CD4-positive, alpha-beta T cell (primary cell): ENCODE measurements at regions of chr21 and their contacts with region 1.

Region 1: DNA sequence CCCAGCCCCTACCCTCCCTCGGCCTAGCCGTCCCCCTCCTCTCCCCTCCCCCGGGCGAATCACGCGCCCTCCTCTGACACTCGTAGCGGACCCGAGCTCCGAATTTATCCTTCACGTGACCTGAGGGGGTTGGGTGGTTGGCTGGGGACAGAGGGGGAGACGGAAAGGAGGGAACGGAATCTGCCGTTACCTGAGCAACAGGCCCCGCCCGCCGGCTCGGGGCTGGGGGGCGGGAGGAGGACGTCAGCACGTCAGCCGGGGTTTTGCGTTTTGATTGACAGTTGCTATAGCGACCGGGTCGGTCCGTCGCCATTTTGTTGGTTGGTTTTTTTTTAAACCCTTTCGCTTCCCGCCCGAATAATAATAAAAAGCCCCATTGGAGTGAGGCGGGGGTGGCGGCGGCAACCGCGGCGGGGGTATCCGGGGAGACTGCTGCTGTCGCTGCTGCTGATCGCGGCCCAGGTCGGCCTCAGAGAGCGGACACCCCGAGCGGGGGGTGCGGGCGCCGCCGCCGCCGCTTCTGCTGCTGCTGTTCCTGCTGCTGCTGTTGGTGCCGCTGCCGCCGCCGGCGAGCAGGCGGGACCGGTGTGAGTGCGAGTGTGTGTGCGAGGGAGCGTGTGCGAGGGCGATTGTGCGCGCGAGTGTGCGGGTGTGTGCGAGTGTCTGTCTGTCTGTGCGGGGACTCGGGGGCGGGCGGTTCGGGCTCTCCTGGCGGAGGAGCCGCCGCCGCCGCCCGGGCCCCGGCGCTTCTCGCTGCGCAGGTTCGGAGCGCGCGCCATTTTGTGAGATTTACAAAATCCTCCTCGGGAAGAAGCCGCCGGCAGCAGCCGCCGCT is at the start of gene DYRK1A:
- DNase-seq: peak; percentile 97 to 100 (median 98)
- ATAC-seq: peak; percentile 82
- H3K4me3 ChIP-seq: peak within 1 kb of the TSS; percentile 83
- H3K4me3 Mint-ChIP-seq: peak within 1 kb of the TSS; percentile 100
- H3K27ac ChIP-seq: peak within 1 kb of the TSS; percentile 92 to 99
- H3K27ac Mint-ChIP-seq: peak within 1 kb of the TSS; percentile 99
- H3K4me1 ChIP-seq: peaks cover 17% of the 10 kb centered on the region
- H3K4me1 Mint-ChIP-seq: peaks cover 53% of the 10 kb centered on the region
- H3K27me3 ChIP-seq: no peaks in the 10 kb centered on the region
- H3K27me3 Mint-ChIP-seq: no peaks in the 10 kb centered on the region
- CTCF ChIP-seq: no peak
- total RNA-seq, gene DYRK1A: 135 to 145 TPM

Region 2: DNA sequence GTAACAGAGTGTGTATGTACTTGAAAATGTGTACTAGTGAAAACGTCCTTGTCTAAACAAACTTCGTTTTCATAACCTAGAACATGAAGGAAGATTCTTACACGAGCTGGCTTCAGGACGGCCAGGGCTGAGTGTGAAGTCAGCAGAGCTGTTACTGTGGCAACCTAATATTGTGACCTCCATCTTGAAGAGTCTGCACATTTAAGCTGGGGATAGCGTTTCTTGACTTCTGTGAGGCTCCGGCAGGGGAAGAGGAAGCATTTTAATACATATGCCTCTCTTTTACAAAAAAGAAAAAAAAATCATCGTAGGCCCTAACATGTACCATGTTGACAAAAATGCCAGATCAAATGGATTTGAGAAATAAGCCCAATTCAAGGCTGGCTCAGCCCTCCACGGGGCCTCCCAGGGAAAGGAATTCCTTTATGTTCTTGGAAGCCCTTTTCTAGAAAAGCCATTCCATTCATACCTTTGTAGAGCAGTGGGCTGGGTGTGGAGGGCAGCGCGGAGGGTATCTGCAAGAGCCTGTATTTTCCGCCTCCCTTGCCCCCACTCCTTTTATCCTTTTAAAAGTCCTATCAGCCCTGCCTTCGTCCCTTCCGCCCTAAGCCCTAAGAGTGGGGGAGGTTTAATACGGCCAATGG is 616.6 kb before region 1 on chr21:
- CTCF ChIA-PET with region 1: no interaction called
- POLR2A ChIA-PET with region 1: no interaction called
- intact Hi-C with region 1: no loop called
- DNase-seq: no peak
- ATAC-seq: no peak
- H3K4me3 ChIP-seq: no peak overlapping the region
- H3K4me3 Mint-ChIP-seq: no peak overlapping the region
- H3K27ac ChIP-seq: no peak overlapping the region
- H3K27ac Mint-ChIP-seq: no peak overlapping the region
- H3K4me1 ChIP-seq: peaks cover 5% of the 10 kb centered on the region
- H3K4me1 Mint-ChIP-seq: peaks cover 16% of the 10 kb centered on the region
- H3K27me3 ChIP-seq: peaks cover 15 to 29% of the 10 kb centered on the region in 2 experiments
- H3K27me3 Mint-ChIP-seq: peaks cover 51% of the 10 kb centered on the region
- CTCF ChIP-seq: no peak

Region 3: GRCh38 chr21:36966066-36966820 is 400.5 kb before region 1 on chr21 and contains the start of gene HLCS:
- CTCF ChIA-PET with region 1: no interaction called
- POLR2A ChIA-PET with region 1: interaction called, 4 read pairs
- intact Hi-C with region 1: loop called in 1 of 2 experiments (anchors 5 kb)
- DNase-seq: peak; percentile 50 to 92 (median 69)
- ATAC-seq: peak; percentile 94
- H3K4me3 ChIP-seq: peak within 1 kb of the TSS; percentile 63
- H3K4me3 Mint-ChIP-seq: peak within 1 kb of the TSS; percentile 85
- H3K27ac ChIP-seq: peak within 1 kb of the TSS; percentile 48 to 63
- H3K27ac Mint-ChIP-seq: peak within 1 kb of the TSS; percentile 84
- H3K4me1 ChIP-seq: peaks cover 16% of the 10 kb centered on the region
- H3K4me1 Mint-ChIP-seq: peaks cover 20% of the 10 kb centered on the region
- H3K27me3 ChIP-seq: no peaks in the 10 kb centered on the region
- H3K27me3 Mint-ChIP-seq: no peaks in the 10 kb centered on the region
- CTCF ChIP-seq: no peak
- total RNA-seq, gene HLCS: 8.1 to 10.0 TPM

Region 4: GRCh38 chr21:37220981-37221664 is 145.6 kb before region 1 on chr21:
- CTCF ChIA-PET with region 1: no interaction called
- POLR2A ChIA-PET with region 1: interaction called, 6 read pairs
- intact Hi-C with region 1: loop called (anchors 2 kb)
- DNase-seq: peak; percentile 83 to 97 (median 92)
- ATAC-seq: peak; percentile 81
- H3K4me3 ChIP-seq: peak overlapping the region; percentile 91
- H3K4me3 Mint-ChIP-seq: peak overlapping the region; percentile 86
- H3K27ac ChIP-seq: peak overlapping the region; percentile 84 to 86
- H3K27ac Mint-ChIP-seq: peak overlapping the region; percentile 90
- H3K4me1 ChIP-seq: peaks cover 49% of the 10 kb centered on the region
- H3K4me1 Mint-ChIP-seq: peaks cover 58% of the 10 kb centered on the region
- H3K27me3 ChIP-seq: no peaks in the 10 kb centered on the region
- H3K27me3 Mint-ChIP-seq: no peaks in the 10 kb centered on the region
- CTCF ChIP-seq: no peak

Region 5: DNA sequence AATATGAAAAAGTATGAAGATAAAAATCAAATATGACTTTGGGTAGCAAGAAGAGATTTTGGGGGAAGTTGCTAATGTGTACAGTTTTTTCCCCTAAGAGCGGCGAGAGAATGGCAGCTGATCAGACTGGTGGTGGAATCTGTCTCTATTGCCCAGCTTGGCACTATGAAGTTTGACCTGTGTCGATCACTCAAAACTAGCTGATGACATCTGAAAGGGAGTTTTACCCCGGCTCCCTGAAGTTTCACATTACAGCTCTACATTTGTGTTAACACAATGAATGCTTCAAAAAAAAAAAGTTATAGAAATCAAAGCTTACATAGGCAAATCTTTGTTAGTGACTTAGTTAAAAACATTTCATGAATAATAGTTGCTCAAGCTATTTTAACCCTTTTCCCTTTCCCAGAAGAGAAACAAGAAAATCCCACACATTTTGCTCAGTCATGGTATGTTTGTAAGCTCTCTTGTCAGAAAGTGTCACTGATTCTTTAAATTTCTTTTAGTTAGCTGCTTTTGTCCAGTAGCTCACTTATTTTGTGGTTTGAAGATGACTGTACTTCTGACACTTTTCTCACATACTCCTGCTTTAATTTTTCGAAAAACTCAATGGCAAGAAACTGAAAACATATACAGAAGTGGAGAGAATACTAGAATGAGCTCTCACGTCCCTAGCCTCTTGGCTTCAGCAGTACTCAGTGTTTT is 41.2 kb after region 1 on chr21:
- CTCF ChIA-PET with region 1: no interaction called
- POLR2A ChIA-PET with region 1: interaction called, 8 read pairs
- intact Hi-C with region 1: loop called in 1 of 2 experiments (anchors 5 kb)
- DNase-seq: no peak
- ATAC-seq: no peak
- H3K4me3 ChIP-seq: no peak overlapping the region
- H3K4me3 Mint-ChIP-seq: peak overlapping the region; percentile 2
- H3K27ac ChIP-seq: no peak overlapping the region
- H3K27ac Mint-ChIP-seq: peak overlapping the region; percentile 6
- H3K4me1 ChIP-seq: peaks cover 52% of the 10 kb centered on the region
- H3K4me1 Mint-ChIP-seq: peaks cover 86% of the 10 kb centered on the region
- H3K27me3 ChIP-seq: no peaks in the 10 kb centered on the region
- H3K27me3 Mint-ChIP-seq: no peaks in the 10 kb centered on the region
- CTCF ChIP-seq: no peak

Region 6: DNA sequence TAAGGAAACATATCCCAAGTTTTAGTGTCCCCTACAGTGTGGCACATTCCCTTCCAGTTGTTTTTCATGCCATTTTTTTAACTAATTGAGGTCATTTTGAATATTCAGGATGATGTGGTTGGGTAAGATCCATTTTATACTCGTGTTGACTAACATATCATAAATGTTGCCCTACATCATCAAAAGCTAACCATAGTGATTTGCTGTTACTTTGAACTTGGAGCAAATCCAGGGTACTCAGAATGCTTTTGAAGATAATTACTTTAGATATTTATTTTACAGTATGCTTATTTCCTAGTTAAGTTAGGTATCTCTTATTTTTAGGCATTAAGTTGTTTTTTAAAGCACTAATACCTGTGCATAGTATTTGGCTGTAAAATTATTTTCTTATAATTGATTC is 57.7 kb after region 1 on chr21:
- CTCF ChIA-PET with region 1: no interaction called
- POLR2A ChIA-PET with region 1: no interaction called
- intact Hi-C with region 1: no loop called
- DNase-seq: no peak
- ATAC-seq: no peak
- H3K4me3 ChIP-seq: no peak overlapping the region
- H3K4me3 Mint-ChIP-seq: no peak overlapping the region
- H3K27ac ChIP-seq: no peak overlapping the region
- H3K27ac Mint-ChIP-seq: no peak overlapping the region
- H3K4me1 ChIP-seq: peaks cover 3% of the 10 kb centered on the region
- H3K4me1 Mint-ChIP-seq: peaks cover 83% of the 10 kb centered on the region
- H3K27me3 ChIP-seq: no peaks in the 10 kb centered on the region
- H3K27me3 Mint-ChIP-seq: no peaks in the 10 kb centered on the region
- CTCF ChIP-seq: no peak

Region 7: DNA sequence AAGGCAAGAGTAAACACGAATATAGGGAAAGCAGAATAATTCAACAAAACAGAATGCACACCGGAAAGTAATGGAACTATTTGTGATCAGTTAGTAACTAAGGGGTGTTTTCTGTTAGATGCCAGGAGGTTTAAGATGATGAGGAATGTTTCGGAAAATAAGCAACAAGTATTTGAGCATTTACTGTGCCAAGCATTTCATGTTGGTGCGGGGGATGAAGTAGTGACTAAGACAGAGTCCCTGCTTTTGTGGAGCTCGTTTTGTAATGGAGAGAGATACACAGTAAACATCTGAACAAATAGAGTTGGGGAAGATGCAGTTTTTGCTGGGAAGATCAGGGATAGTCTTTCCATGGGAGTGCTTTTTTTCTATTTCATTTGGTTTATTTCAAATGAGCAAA is 78.5 kb after region 1 on chr21:
- CTCF ChIA-PET with region 1: no interaction called
- POLR2A ChIA-PET with region 1: no interaction called
- intact Hi-C with region 1: no loop called
- DNase-seq: no peak
- ATAC-seq: no peak
- H3K4me3 ChIP-seq: no peak overlapping the region
- H3K4me3 Mint-ChIP-seq: peak overlapping the region; percentile 6
- H3K27ac ChIP-seq: no peak overlapping the region
- H3K27ac Mint-ChIP-seq: peak overlapping the region; percentile 6
- H3K4me1 ChIP-seq: peaks cover 36% of the 10 kb centered on the region
- H3K4me1 Mint-ChIP-seq: peaks cover 95% of the 10 kb centered on the region
- H3K27me3 ChIP-seq: no peaks in the 10 kb centered on the region
- H3K27me3 Mint-ChIP-seq: no peaks in the 10 kb centered on the region
- CTCF ChIP-seq: no peak

Region 8: DNA sequence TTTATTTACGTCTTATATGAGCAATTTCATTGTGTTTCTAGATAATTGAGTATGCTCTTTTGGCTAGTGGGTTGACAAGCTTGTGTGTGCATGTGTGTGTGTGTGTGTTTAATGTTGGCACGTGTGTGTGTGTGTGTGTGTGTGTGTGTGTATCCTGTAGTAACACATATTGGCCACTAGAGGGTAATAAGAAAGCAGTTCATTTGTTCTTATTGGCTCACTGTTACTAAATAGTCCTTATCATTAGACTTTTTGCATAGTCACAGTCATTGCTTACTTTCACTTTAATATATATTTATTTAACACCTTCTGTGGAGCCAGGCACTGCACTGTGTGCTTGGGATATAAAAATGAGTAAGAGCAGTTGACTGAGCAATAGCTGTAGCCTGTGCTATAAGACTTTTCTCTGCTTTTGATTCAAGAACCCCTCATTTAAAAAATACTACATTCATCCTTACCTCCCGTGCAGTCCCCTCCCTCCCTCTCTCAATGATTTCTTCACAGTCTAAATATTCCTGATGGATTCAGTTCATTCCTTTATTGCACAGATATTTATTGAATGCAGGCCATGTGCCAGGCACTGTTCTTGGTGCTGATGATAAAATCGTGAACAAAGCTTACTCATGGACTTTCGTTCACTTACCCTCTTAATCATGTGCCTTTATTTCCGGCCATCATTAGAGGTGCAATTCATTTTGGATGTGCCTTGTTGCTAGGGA is 96.5 kb after region 1 on chr21:
- CTCF ChIA-PET with region 1: interaction called, 4 read pairs
- POLR2A ChIA-PET with region 1: no interaction called
- intact Hi-C with region 1: loop called in 1 of 2 experiments (anchors 5 kb)
- DNase-seq: peak in 5 of 14 experiments; percentile 24 to 65 (median 54)
- ATAC-seq: peak; percentile 49
- H3K4me3 ChIP-seq: no peak overlapping the region
- H3K4me3 Mint-ChIP-seq: peak overlapping the region; percentile 62
- H3K27ac ChIP-seq: no peak overlapping the region
- H3K27ac Mint-ChIP-seq: peak overlapping the region; percentile 66
- H3K4me1 ChIP-seq: peaks cover 32% of the 10 kb centered on the region
- H3K4me1 Mint-ChIP-seq: peaks cover 95% of the 10 kb centered on the region
- H3K27me3 ChIP-seq: no peaks in the 10 kb centered on the region
- H3K27me3 Mint-ChIP-seq: no peaks in the 10 kb centered on the region
- CTCF ChIP-seq: peak; percentile 53

Region 9: GRCh38 chr21:39313571-39314142 is 1947.0 kb after region 1 on chr21 and contains the start of gene BRWD1:
- CTCF ChIA-PET with region 1: no interaction called
- POLR2A ChIA-PET with region 1: no interaction called
- intact Hi-C with region 1: loop called in 1 of 2 experiments (anchors 10 kb)
- DNase-seq: peak; percentile 68 to 92 (median 75)
- ATAC-seq: peak; percentile 27
- H3K4me3 ChIP-seq: peak within 1 kb of the TSS; percentile 79
- H3K4me3 Mint-ChIP-seq: peak within 1 kb of the TSS; percentile 95
- H3K27ac ChIP-seq: peak within 1 kb of the TSS; percentile 55 to 85
- H3K27ac Mint-ChIP-seq: peak within 1 kb of the TSS; percentile 93
- H3K4me1 ChIP-seq: peaks cover 31% of the 10 kb centered on the region
- H3K4me1 Mint-ChIP-seq: peaks cover 50% of the 10 kb centered on the region
- H3K27me3 ChIP-seq: no peaks in the 10 kb centered on the region
- H3K27me3 Mint-ChIP-seq: no peaks in the 10 kb centered on the region
- CTCF ChIP-seq: no peak
- total RNA-seq, gene BRWD1: 84.7 to 92.2 TPM